ENCODE measurements at regions of chr9 and their contacts with region 1.

Region 1: GRCh38 chr9:34500623-34501267 is 22.0 kb downstream of the ENHO start:
- DNase-seq: peak; percentile 54 to 76
- H3K4me3 ChIP-seq: no peak overlapping the region
- H3K4me3 Mint-ChIP-seq: no peak overlapping the region
- H3K27ac Mint-ChIP-seq: no peak overlapping the region
- H3K4me1 ChIP-seq: no peaks in the 10 kb centered on the region
- H3K4me1 Mint-ChIP-seq: no peaks in the 10 kb centered on the region
- H3K27me3 ChIP-seq: no peaks in the 10 kb centered on the region
- H3K27me3 Mint-ChIP-seq: peaks cover 17% of the 10 kb centered on the region
- CTCF ChIP-seq: peak; percentile 93 to 96

Region 2: DNA sequence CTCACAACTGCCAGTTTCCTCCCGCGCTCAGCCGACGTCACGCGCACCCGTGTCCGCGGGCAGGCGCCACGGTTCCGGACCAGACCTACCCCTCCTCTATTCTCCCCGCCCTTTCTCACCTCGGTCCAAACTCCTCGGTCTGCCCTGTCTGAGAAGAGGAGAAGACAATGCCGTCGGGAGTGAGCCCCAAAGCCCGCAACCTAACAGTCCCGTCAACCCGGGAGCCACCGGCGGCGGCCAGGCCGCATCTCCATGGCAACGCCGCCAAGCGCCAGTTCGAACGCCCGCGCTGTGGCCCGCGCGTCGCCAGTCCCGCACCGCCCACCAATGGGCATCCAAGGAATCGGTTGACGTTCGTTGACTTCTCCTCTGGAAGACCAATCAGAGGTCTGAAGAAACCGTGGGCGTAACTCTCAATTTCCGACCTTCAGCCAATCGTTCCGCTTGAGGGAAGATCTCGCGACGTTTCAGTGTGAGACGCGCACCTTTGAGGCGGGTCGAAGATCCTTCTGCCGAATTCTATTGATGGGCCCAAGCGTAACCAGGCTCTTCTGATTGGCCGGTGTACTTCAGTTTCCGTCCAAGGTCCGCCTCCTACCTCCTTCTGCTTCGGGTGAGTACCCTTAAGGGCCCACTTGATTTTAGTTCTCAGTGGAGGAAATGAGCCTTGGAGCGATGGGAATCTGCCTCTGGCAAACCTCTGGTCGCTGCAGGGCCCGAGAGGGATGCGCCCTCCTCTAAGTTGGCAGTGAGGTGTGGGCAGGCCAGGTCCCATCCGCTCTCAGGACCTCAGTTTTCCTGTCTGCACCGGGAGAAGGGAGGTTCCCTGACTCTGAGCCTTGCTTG is 171.5 kb before region 1 on chr9 and contains the starts of genes KIF24 and NUDT2:
- CTCF ChIA-PET with region 1: no interaction called
- POLR2A ChIA-PET with region 1: no interaction called
- intact Hi-C with region 1: loop called (anchors 2 kb)
- DNase-seq: peak; percentile 98 to 99
- H3K4me3 ChIP-seq: peak within 1 kb of the TSS; percentile 96
- H3K4me3 Mint-ChIP-seq: peak within 1 kb of the TSS; percentile 83
- H3K27ac Mint-ChIP-seq: peak within 1 kb of the TSS; percentile 94
- H3K4me1 ChIP-seq: no peaks in the 10 kb centered on the region
- H3K4me1 Mint-ChIP-seq: peaks cover 13% of the 10 kb centered on the region
- H3K27me3 ChIP-seq: no peaks in the 10 kb centered on the region
- H3K27me3 Mint-ChIP-seq: no peaks in the 10 kb centered on the region
- CTCF ChIP-seq: no peak
- total RNA-seq, gene KIF24: 3.9 and 4.4 TPM in 2 replicates
- total RNA-seq, gene NUDT2: 14.4 and 15.0 TPM in 2 replicates

Region 3: DNA sequence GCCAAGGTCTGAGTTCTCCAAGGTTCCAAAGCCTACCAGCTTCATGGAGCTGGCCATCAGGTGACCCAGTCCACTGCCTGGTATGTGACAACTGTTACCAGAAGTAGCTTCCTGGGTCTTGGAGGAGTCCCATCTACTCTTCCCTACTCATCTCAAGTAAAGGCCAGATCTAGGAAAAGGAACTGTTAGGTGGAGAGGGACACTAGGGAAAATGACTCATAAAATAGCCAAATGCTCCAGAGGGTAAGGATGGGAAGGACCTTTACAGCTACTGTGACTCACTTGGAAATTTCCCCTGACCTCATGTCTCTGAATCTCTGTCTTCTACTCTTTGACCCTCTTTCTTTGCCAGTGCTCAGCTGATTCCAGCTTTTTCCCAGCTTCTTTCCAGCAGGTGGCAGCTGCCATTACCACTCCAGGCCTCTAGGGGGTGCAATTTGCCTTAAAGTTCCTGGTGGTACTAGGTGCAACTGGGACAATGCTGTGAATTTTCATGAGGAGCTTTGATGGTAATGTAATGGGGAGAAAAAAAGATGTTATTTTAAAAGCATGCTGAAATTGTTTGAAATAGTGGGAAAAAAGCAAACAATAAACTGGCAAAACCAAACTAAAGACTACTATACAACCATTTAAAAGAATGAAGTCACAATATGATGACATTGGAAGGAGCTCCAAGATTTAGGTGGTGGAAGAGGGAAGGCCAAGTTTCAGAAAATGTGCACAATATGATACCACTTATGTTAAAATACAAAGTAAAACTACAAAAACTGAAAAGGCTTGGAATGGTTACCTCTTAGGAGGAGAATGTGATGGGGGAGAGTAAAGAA is 97.0 kb before region 1 on chr9:
- CTCF ChIA-PET with region 1: interaction called, 16 read pairs
- POLR2A ChIA-PET with region 1: no interaction called
- intact Hi-C with region 1: loop called (anchors 1 kb)
- DNase-seq: peak; percentile 78 to 83
- H3K4me3 ChIP-seq: no peak overlapping the region
- H3K4me3 Mint-ChIP-seq: no peak overlapping the region
- H3K27ac Mint-ChIP-seq: no peak overlapping the region
- H3K4me1 ChIP-seq: no peaks in the 10 kb centered on the region
- H3K4me1 Mint-ChIP-seq: no peaks in the 10 kb centered on the region
- H3K27me3 ChIP-seq: no peaks in the 10 kb centered on the region
- H3K27me3 Mint-ChIP-seq: no peaks in the 10 kb centered on the region
- CTCF ChIP-seq: peak; percentile 96

Region 4: DNA sequence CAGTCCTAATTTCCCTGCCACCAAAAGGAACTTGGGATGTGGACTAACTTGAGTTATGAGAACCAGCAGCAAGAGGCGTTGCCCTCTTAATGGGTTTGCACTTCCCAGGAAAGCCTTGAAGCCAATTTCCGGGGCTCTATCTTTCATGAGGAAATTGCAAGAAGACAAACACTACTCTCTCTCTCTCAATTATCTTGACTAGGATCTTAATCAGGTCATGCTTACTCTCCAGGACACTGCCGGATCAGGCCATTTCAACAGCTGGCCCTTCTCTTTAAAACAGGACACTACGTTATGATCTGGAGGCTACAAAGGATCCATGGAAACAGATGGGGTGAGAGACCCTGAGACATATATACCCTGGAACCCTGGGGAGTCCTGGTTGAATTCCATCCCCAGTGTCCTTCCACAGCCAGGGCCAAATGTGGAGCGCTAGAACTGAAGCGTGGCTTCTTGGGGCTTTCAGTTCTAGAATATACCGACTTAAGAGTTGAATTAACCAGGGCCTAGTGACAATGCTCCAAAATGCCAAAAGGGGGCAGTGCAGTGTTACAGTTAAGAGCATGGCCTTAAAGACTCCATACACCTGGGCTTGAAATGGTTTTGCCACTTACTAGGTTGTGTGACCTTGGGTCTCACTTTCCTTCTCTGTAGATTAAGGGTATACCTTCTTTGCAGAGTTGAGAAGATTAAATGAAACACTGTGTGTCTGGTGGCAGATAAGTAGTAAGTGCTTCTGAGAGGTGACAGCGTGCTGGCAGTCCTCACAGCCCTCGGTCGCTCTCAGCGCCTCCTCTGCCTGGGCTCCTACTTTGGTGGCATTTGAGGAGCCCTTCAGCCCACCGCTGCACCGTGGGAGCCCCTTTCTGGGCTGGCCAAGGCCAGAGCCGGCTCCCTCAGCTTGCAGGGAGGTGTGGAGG is 63.5 kb before region 1 on chr9:
- CTCF ChIA-PET with region 1: interaction called, 3 read pairs
- POLR2A ChIA-PET with region 1: no interaction called
- intact Hi-C with region 1: loop called (anchors 1 kb)
- DNase-seq: peak; percentile 54 to 65
- H3K4me3 ChIP-seq: no peak overlapping the region
- H3K4me3 Mint-ChIP-seq: no peak overlapping the region
- H3K27ac Mint-ChIP-seq: no peak overlapping the region
- H3K4me1 ChIP-seq: no peaks in the 10 kb centered on the region
- H3K4me1 Mint-ChIP-seq: no peaks in the 10 kb centered on the region
- H3K27me3 ChIP-seq: no peaks in the 10 kb centered on the region
- H3K27me3 Mint-ChIP-seq: no peaks in the 10 kb centered on the region
- CTCF ChIP-seq: peak; percentile 67 to 69

Region 5: DNA sequence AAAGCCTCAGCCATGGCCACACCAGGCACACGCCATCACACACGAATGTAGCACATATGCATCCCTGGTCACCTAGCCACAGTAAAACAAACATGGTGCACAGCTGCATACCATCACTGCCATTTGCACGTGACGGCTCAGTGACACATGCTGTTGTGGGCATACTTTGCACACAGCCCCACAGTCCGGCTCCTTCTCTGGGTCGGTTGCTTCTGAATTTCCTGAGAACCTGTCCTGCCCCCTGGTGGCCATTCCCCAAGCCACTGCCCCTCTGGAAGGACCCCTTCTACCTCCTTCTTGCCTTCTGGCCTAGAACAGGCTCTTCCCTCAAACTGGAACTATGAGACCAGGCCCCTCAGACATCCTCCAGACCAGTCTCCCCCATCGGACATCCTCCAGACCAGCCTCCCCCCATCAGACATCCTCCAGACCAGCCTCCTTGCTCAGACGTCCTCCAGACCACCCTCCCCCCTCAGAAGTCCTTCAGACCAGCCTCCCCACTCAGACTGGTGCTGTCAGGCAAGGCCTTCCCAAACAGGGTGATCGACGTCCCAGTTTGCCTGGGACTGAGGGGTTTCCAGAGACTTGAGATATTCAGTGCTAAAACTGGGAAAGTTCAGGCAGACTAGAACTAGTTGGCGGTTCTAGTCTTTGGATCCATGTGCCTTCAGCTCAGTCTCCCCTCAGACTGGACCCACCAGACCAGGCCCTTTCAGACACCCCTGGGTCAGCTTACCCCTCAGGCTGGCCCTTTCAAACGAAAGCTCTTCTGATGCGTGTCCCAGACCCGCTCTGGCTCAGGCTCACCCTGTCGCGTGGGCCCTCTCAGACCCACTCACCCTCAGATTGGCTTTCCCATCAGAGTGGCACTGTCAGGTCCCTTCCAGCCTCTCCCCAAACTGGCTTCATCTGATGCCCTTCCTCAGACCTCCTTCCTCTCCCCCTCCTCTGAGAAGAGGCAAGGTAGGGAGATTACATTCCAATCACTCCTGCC is 46.4 kb after region 1 on chr9:
- CTCF ChIA-PET with region 1: interaction called, 4 read pairs
- POLR2A ChIA-PET with region 1: no interaction called
- intact Hi-C with region 1: loop called (anchors 5 kb)
- DNase-seq: peak; percentile 61 to 67
- H3K4me3 ChIP-seq: no peak overlapping the region
- H3K4me3 Mint-ChIP-seq: no peak overlapping the region
- H3K27ac Mint-ChIP-seq: no peak overlapping the region
- H3K4me1 ChIP-seq: no peaks in the 10 kb centered on the region
- H3K4me1 Mint-ChIP-seq: no peaks in the 10 kb centered on the region
- H3K27me3 ChIP-seq: no peaks in the 10 kb centered on the region
- H3K27me3 Mint-ChIP-seq: peaks cover 13% of the 10 kb centered on the region
- CTCF ChIP-seq: peak; percentile 58 to 60

Region 6: DNA sequence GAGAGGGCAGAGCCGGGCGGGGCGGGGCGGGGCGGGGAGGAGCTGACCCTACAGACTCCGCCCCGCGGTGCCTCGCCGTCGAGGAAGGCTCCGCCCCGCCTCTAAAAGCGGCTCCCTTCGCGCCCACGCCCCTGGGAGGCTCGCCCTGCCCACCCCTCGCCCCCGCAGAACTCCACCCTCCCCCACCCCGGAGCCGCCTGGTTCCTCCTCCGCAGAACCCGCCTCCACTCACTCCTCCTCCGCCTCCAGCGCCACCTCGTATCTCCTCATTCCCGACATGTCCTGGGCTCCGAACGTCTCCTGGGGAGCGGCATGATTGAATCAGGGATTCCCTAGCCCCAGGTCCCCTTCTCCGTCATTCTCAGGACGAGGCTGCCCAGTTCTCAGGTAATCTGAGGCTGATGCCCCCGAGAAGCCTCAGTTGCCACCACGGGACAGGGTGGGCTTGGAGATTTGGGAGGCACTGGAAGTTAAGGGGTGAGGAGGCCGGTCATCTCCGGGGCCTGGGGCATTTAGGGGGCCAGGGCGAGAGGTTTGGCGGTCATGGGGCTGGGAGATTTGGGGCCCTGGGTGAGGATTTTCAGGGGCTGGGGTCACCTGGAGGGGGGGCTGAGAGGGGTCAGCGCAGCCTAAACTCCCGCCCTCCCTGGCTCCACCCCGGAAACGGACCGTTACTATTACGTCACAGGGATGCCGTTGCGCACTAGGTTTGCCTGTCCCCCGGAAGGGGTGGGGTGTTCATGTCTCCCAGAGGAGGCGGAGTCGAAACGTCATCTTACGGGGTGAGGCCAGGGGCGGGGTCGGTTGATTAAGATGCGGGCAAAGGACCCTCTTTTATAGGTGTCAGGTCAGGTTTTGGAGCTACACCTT is 164.9 kb after region 1 on chr9:
- CTCF ChIA-PET with region 1: no interaction called
- POLR2A ChIA-PET with region 1: no interaction called
- intact Hi-C with region 1: no loop called
- DNase-seq: peak; percentile 83 to 89
- H3K4me3 ChIP-seq: peak overlapping the region; percentile 57
- H3K4me3 Mint-ChIP-seq: peak overlapping the region; percentile 81
- H3K27ac Mint-ChIP-seq: peak overlapping the region; percentile 61
- H3K4me1 ChIP-seq: peaks cover 15% of the 10 kb centered on the region
- H3K4me1 Mint-ChIP-seq: peaks cover 28% of the 10 kb centered on the region
- H3K27me3 ChIP-seq: no peaks in the 10 kb centered on the region
- H3K27me3 Mint-ChIP-seq: no peaks in the 10 kb centered on the region
- CTCF ChIP-seq: no peak